MCF 10A (cell line): ENCODE measurements at regions of chr4 and their contacts with region 1.

Region 1: GRCh38 chr4:37725718-37726117 is 39.5 kb upstream of the RELL1 start:
- DNase-seq: no peak
- H3K4me3 Mint-ChIP-seq: no peak overlapping the region
- H3K27ac Mint-ChIP-seq: no peak overlapping the region
- H3K4me1 Mint-ChIP-seq: peaks cover 21% of the 10 kb centered on the region
- H3K27me3 Mint-ChIP-seq: no peaks in the 10 kb centered on the region
- CTCF ChIP-seq: no peak

Region 2: DNA sequence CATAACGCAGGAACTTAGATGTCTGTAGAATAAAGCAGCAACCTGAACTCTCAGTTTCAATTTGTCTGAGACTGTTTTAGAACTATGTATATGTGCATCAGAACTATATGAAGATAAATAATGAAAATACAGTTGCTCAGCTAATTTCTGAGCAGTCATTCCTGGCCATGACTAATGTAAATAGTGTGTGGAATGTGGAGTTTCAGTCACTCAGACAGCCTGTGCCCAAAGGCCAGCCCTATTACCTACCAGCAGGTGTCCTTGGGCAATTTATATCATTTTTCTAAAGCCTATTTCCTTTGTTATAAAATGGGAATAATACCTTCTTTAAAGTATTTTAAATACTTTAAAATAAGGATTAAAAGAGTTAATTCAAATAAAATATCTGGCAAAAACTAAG is 16.4 kb after region 1 on chr4:
- CTCF ChIA-PET with region 1: no interaction called
- POLR2A ChIA-PET with region 1: no interaction called
- intact Hi-C with region 1: loop called (anchors 1 kb)
- DNase-seq: peak; percentile 28
- H3K4me3 Mint-ChIP-seq: no peak overlapping the region
- H3K27ac Mint-ChIP-seq: no peak overlapping the region
- H3K4me1 Mint-ChIP-seq: peaks cover 3% of the 10 kb centered on the region
- H3K27me3 Mint-ChIP-seq: no peaks in the 10 kb centered on the region
- CTCF ChIP-seq: no peak